Keratinocyte (primary cell): ENCODE measurements at regions of chr4 and their contacts with region 1.

Region 1: DNA sequence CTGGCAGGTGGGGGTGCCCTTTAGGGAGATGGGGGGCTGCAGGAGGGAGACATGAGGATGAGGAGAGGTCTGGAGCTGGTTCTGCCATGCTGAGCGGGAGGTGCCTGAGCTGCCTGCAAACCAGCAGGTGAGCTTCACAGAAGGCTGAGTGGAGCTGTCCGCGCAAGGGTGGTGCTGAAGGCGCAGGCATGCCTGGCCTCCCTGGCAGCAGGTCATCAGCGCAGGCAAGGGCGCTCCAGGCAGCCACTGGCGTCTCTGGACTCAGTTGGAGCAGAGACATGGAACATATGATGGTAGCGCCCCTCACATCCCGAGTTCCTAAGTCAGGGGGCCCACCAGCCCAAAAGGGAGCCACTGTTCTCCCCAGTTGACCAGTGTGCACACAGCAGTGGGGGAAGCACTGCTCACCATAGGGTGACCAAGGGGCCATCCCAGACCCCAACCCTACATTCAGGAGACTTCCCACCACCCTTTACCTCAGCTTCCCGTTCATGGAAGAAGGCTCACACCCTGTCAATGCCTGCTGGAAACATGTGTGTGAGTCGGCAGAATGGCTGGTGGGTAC is 25.9 kb downstream of the ADRA2C start:
- DNase-seq: no peak
- H3K4me3 ChIP-seq: no peak overlapping the region
- H3K27ac ChIP-seq: no peak overlapping the region
- H3K4me1 ChIP-seq: no peaks in the 10 kb centered on the region
- H3K27me3 ChIP-seq: no peaks in the 10 kb centered on the region
- CTCF ChIP-seq: no peak

Region 2: GRCh38 chr4:3732076-3733028 is 59.7 kb before region 1 on chr4:
- dilution Hi-C with region 1: loop called (anchors 10 kb)
- DNase-seq: no peak
- H3K4me3 ChIP-seq: no peak overlapping the region
- H3K27ac ChIP-seq: no peak overlapping the region
- H3K4me1 ChIP-seq: no peaks in the 10 kb centered on the region
- H3K27me3 ChIP-seq: peaks cover 5% of the 10 kb centered on the region
- CTCF ChIP-seq: no peak